ENCODE measurements at regions of chr1 and their contacts with region 1.

Region 1: GRCh38 chr1:175015243-175015642 is 8.0 kb downstream of the MRPS14 start:
- DNase-seq: no peak
- ATAC-seq: no peak
- H3K4me3 ChIP-seq: no peak overlapping the region
- H3K27ac ChIP-seq: no peak overlapping the region
- H3K4me1 ChIP-seq: peaks cover 3 to 7% of the 10 kb centered on the region in 2 experiments; a peak in 3 of 5 replicates
- H3K27me3 ChIP-seq: no peaks in the 10 kb centered on the region
- CTCF ChIP-seq: no peak
- EP300 ChIP-seq: no peak
- POLR2A ChIP-seq: no peak
- RAD21 ChIP-seq: no peak

Region 2: DNA sequence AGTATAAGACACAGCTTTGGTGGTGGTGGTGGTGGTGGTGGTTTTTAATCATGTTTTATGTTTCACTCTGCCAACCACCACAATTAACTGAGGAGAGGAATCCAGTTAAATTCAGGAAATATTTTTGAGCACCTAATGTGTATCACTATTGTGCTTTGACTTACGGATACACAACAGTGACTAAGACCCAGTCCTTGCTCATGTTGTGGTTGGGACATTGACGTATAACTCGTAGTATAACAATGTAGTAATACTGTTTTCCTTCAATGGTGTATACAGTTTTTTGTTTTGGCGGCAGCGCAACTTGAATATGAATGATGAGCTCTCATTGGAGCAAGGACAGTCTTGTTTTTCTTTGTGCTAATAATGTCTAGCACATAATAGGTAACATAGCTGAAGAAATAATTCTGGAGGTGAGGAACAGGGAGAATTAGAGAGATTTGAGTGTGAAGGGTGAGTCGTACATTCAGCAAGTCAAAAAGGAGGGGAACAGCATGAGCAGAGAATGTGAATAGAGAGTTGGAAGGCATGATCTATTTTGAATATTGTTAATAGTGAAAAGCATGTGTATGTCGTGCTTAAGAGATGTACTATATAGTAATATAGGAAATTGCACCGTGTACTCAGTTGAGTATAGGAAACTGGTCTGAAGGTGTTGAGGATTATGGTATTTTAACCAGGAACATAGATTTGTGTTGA is 10.0 kb before region 1 on chr1:
- CTCF ChIA-PET with region 1: no interaction called
- POLR2A ChIA-PET with region 1: interaction called, 33 read pairs
- in situ Hi-C with region 1: no loop called
- intact Hi-C with region 1: no loop called
- DNase-seq: no peak
- ATAC-seq: no peak
- H3K4me3 ChIP-seq: no peak overlapping the region
- H3K27ac ChIP-seq: 0 out of 3 replicates have a peak overlapping the region, but pooled peaks have one; percentile 6
- H3K4me1 ChIP-seq: peaks cover 5 to 8% of the 10 kb centered on the region in 2 experiments; a peak in 3 of 5 replicates
- H3K27me3 ChIP-seq: no peaks in the 10 kb centered on the region
- CTCF ChIP-seq: no peak
- EP300 ChIP-seq: no peak
- POLR2A ChIP-seq: no peak
- RAD21 ChIP-seq: no peak

Region 3: DNA sequence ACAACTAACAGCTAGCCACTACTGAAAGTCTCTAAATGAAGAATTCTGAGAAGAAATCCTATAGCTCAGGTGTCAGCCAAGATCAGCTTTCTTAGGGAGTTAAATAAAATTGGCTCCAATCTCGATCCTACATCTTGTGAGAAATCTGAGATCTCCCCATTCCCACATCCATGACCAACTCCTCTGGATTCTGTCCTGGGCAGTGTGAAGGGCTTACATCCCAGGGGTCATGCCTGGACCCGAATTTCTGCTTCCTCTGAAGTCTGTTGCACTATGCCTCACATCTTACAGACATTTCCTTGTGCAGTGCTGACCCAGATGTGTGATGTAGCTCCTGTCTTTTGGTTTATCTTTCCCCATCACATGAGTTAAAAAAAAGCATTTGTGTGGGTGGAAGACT is 47.6 kb after region 1 on chr1:
- CTCF ChIA-PET with region 1: no interaction called
- POLR2A ChIA-PET with region 1: no interaction called
- in situ Hi-C with region 1: no loop called
- intact Hi-C with region 1: no loop called
- DNase-seq: no peak
- ATAC-seq: no peak
- H3K4me3 ChIP-seq: no peak overlapping the region
- H3K27ac ChIP-seq: no peak overlapping the region
- H3K4me1 ChIP-seq: no peaks in the 10 kb centered on the region
- H3K27me3 ChIP-seq: peaks cover 14 to 17% of the 10 kb centered on the region in 2 experiments; a peak in 4 of 5 replicates
- CTCF ChIP-seq: no peak
- EP300 ChIP-seq: no peak
- POLR2A ChIP-seq: no peak
- RAD21 ChIP-seq: no peak

Measured in K562 (cell line).